ENCODE measurements at regions of chr22 and their contacts with region 1.

Region 1: DNA sequence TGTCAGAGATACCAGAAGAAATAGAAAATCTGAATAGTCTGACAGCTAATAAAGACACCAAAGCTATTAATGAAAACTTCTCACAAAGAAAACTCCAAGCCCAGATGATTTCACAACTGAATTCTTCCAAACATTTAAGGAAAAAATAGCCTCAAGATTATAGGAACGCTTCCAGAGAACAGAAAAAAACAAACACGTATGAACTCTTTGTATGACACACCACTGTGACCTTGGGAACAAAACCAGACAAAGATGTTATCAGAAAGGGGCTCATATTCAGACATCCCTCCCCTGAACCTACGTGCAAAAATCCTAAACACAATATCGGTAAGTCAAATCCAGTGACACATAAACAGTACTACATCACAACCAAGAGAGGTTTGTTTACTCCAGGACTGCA is 23.5 kb downstream of the CERK start:
- DNase-seq: no peak
- H3K4me3 ChIP-seq: no peak overlapping the region
- H3K27me3 ChIP-seq: no peaks in the 10 kb centered on the region
- CTCF ChIP-seq: no peak

Region 2: GRCh38 chr22:46726066-46726985 is 11.8 kb after region 1 on chr22:
- CTCF ChIA-PET with region 1: no interaction called
- POLR2A ChIA-PET with region 1: no interaction called
- DNase-seq: peak; percentile 46
- H3K4me3 ChIP-seq: no peak overlapping the region
- H3K27me3 ChIP-seq: no peaks in the 10 kb centered on the region
- CTCF ChIP-seq: no peak

Region 3: DNA sequence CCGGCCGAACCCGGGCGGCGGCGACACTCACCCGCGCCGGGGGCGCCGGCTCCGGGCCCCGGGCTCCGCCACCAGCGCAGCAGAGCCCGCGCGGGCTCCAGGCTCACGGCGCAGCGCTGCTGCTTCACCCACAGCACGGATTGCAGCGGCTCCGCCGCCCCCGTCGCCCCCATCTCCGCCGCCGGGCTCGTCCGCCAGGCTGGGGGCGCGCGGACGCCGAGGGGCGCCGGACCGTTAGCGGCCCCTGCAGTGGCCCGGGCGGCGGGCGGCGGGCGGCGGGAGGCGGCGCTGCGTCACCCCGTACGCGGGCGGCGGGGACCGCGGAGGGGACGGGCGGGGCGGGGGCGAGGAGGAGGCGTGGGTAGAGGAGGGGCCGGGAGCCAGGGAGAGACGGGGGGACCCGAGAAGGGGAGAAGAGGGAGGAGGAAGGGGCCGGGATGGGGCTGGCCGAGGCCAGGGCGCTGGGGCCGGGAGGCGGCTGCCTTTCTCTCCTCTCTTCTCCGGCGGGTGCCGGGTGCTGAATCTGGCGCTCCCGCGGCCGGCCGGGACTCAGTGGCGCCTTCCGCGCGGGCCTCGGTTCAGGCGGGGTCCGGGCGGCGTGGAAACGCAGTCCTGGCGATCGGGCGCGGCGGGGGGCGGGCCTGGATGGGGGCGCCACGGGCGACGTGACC is 23.6 kb after region 1 on chr22 and contains the start of gene CERK:
- CTCF ChIA-PET with region 1: no interaction called
- POLR2A ChIA-PET with region 1: interaction called, 13 read pairs
- DNase-seq: no peak
- H3K4me3 ChIP-seq: peak within 1 kb of the TSS; percentile 59
- H3K27me3 ChIP-seq: no peaks in the 10 kb centered on the region
- CTCF ChIP-seq: no peak
- polyA plus RNA-seq, gene CERK: 28.9 and 32.6 TPM in 2 replicates

Region 4: DNA sequence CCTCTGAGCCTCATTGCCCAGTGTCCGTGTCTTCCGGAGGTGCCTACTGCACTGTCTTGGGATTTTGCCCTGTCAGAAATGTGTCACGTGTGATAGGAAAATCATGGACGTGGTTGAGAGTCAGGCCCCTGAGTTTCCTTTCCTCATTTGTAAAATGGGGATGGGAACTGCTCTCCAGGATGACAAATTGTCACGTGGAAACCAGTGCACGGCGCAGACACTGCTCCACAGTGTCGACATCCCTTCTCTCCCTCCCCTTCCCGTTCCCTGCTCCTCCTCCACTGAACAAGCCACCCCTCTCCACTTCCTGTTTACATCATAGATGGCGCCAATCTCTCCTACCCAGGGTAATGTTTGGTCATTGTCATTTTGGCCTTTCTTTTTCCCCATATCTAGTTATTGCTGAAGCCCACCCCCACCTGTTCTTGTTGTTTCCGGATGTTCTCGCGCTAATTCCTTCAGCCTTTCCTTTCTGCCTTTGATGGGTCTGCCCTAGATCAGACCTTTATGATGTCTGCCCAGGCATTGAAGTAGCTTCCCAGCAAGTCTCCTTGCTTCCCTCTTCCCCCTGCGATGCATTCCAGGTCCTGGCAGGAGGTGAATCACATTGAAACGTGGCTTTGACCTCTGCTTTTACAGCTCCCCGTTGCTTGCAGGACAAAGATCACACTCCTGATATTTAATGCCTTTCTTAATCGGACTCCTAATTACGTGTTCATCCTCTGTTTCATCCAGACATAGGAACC is 139.7 kb after region 1 on chr22:
- CTCF ChIA-PET with region 1: no interaction called
- POLR2A ChIA-PET with region 1: no interaction called
- DNase-seq: no peak
- H3K4me3 ChIP-seq: no peak overlapping the region
- H3K27me3 ChIP-seq: no peaks in the 10 kb centered on the region
- CTCF ChIP-seq: no peak